ENCODE measurements at regions of chr19 and their contacts with region 1.

Region 1: DNA sequence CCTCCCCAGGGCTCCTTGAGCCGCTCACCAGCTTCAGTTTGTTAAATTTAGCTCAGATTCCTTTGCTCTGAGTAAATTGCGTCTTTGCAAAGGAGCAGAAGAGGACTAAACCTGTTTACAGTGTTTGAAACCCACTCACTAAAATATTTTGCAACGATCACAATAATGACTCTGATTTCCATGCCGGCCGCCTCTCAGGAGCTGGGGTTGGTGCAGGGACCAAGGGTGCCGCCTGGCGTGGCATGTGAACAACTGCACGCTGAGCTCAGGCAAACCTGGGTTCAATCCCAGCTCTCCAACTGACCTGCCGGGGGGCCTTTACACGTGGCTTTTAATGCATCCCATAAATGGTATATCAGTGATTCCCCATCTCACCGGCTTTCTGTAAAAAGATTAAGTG is 68.7 kb upstream of the CACNA1A start:
- DNase-seq: peak; percentile 16
- ATAC-seq: peak; percentile 95
- H3K4me3 ChIP-seq: no peak overlapping the region
- H3K27ac ChIP-seq: no peak overlapping the region
- H3K4me1 ChIP-seq: peaks cover 0 to 6% of the 10 kb centered on the region in 2 experiments; a peak in 1 of 4 replicates
- H3K27me3 ChIP-seq: no peaks in the 10 kb centered on the region
- CTCF ChIP-seq: peak; percentile 75 to 79 (median 78)
- POLR2A ChIP-seq: no peak
- RAD21 ChIP-seq: peak; percentile 89

Region 2: DNA sequence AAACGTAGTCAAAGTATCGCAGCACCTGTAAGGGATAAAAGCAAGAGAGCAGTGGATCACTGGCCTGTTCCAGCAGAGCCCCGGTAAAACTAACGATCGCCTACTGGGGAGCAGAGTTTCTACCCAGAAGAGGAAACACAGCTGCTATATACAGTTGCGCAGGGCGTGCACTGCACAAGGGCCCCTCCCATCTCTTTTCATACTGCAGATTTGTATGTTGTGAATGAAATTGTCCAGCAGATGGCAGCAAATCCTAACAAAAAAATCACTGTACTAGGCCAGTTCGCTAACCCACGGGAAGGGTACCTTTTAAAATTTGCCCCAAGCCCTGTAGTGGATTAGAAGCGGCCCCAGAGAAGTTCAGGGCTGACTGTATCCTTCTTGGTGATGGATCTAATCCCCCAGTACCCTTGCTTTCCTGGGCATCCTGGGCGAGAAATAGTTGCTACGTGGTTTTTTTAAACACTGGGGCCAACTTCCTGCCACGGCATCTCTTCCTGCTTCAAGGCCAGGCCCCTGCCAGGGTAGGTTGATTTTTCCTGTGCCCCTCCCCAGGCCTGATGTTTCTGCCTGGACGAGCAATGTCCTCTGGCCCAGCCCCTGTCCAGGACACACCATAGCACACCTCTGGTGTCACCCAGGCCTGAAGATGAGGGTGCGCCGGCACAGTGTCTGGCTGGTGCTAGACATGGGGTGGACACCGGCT is 297.7 kb before region 1 on chr19:
- CTCF ChIA-PET with region 1: interaction called, 56 read pairs
- POLR2A ChIA-PET with region 1: no interaction called
- RAD21 ChIA-PET with region 1: interaction called, 6 to 7 read pairs
- intact Hi-C with region 1: loop called (anchors 1 kb)
- DNase-seq: peak; percentile 80
- ATAC-seq: peak; percentile 94
- H3K4me3 ChIP-seq: peak overlapping the region; percentile 33 to 35
- H3K27ac ChIP-seq: peak overlapping the region; percentile 11; the same call in 1 of the 2 replicates
- H3K4me1 ChIP-seq: peaks cover 4 to 32% of the 10 kb centered on the region in 2 experiments; a peak in 3 of 4 replicates
- H3K27me3 ChIP-seq: no peaks in the 10 kb centered on the region
- CTCF ChIP-seq: peak; percentile 47 to 88 (median 74)
- POLR2A ChIP-seq: no peak
- RAD21 ChIP-seq: peak; percentile 92

Region 3: GRCh38 chr19:13334801-13335481 is 240.0 kb before region 1 on chr19:
- CTCF ChIA-PET with region 1: interaction called, 12 read pairs
- POLR2A ChIA-PET with region 1: no interaction called
- RAD21 ChIA-PET with region 1: interaction called in 1 of 2 experiments, 6 read pairs
- intact Hi-C with region 1: no loop called
- DNase-seq: peak; percentile 90
- ATAC-seq: peak; percentile 91
- H3K4me3 ChIP-seq: peak overlapping the region; percentile 70 to 84
- H3K27ac ChIP-seq: peak overlapping the region; percentile 64
- H3K4me1 ChIP-seq: peaks cover 2 to 15% of the 10 kb centered on the region in 2 experiments; a peak in 2 of 4 replicates
- H3K27me3 ChIP-seq: no peaks in the 10 kb centered on the region
- CTCF ChIP-seq: peak; percentile 67 to 85 (median 78)
- POLR2A ChIP-seq: peak; percentile 40
- RAD21 ChIP-seq: peak; percentile 82

Region 4: GRCh38 chr19:13366529-13367143 is 208.3 kb before region 1 on chr19:
- CTCF ChIA-PET with region 1: interaction called, 17 read pairs
- POLR2A ChIA-PET with region 1: no interaction called
- RAD21 ChIA-PET with region 1: interaction called in 1 of 2 experiments, 3 read pairs
- intact Hi-C with region 1: loop called (anchors 1 kb)
- DNase-seq: peak; percentile 51
- ATAC-seq: peak; percentile 87
- H3K4me3 ChIP-seq: no peak overlapping the region
- H3K27ac ChIP-seq: no peak overlapping the region
- H3K4me1 ChIP-seq: peaks cover 0 to 6% of the 10 kb centered on the region in 2 experiments; a peak in 1 of 4 replicates
- H3K27me3 ChIP-seq: no peaks in the 10 kb centered on the region
- CTCF ChIP-seq: peak; percentile 64 to 93 (median 75)
- POLR2A ChIP-seq: no peak
- RAD21 ChIP-seq: peak; percentile 95

Region 5: DNA sequence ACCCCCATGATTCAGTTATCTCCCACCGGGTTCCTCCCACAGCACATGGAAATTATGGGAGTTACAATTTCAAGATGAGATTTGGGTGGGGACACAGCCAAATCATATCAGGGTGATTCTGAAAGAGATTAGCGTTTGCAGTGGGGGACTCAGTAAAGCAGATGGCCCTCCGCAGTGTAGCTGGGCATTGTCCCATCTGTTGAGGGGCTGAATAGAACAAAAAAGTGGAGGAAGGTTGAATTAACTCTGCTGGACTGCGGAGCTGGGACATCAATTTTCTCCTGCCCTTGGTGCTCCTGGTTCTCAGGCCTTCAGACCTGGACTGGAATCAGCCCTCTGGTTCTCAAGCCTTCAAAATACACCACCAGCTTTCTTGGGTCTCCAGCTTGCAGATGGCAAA is 13.5 kb before region 1 on chr19:
- CTCF ChIA-PET with region 1: interaction called, 10 read pairs
- POLR2A ChIA-PET with region 1: no interaction called
- RAD21 ChIA-PET with region 1: no interaction called
- intact Hi-C with region 1: no loop called
- DNase-seq: no peak
- ATAC-seq: no peak
- H3K4me3 ChIP-seq: no peak overlapping the region
- H3K27ac ChIP-seq: no peak overlapping the region
- H3K4me1 ChIP-seq: peaks cover 0 to 3% of the 10 kb centered on the region in 2 experiments; a peak in 1 of 4 replicates
- H3K27me3 ChIP-seq: no peaks in the 10 kb centered on the region
- CTCF ChIP-seq: no peak
- POLR2A ChIP-seq: no peak
- RAD21 ChIP-seq: no peak

Region 6: GRCh38 chr19:13588957-13589833 is 14.3 kb after region 1 on chr19:
- CTCF ChIA-PET with region 1: interaction called, 18 read pairs
- POLR2A ChIA-PET with region 1: no interaction called
- RAD21 ChIA-PET with region 1: no interaction called
- intact Hi-C with region 1: no loop called
- DNase-seq: peak; percentile 49
- ATAC-seq: peak; percentile 100
- H3K4me3 ChIP-seq: peak overlapping the region; percentile 26 to 41
- H3K27ac ChIP-seq: no peak overlapping the region
- H3K4me1 ChIP-seq: peaks cover 0 to 10% of the 10 kb centered on the region in 2 experiments; a peak in 2 of 4 replicates
- H3K27me3 ChIP-seq: no peaks in the 10 kb centered on the region
- CTCF ChIP-seq: peak; percentile 93 to 98 (median 98)
- POLR2A ChIP-seq: no peak
- RAD21 ChIP-seq: peak; percentile 89

Region 7: GRCh38 chr19:13748169-13748828 is 173.4 kb after region 1 on chr19:
- CTCF ChIA-PET with region 1: no interaction called
- POLR2A ChIA-PET with region 1: no interaction called
- RAD21 ChIA-PET with region 1: no interaction called
- intact Hi-C with region 1: no loop called
- DNase-seq: no peak
- ATAC-seq: no peak
- H3K4me3 ChIP-seq: peak overlapping the region; percentile 75 to 78
- H3K27ac ChIP-seq: peak overlapping the region; percentile 83
- H3K4me1 ChIP-seq: peaks cover 2 to 16% of the 10 kb centered on the region in 2 experiments; a peak in 3 of 4 replicates
- H3K27me3 ChIP-seq: no peaks in the 10 kb centered on the region
- CTCF ChIP-seq: no peak
- POLR2A ChIP-seq: no peak
- RAD21 ChIP-seq: no peak